A673 (cell line): ENCODE measurements at regions of chr7 and their contacts with region 1.

Region 1: DNA sequence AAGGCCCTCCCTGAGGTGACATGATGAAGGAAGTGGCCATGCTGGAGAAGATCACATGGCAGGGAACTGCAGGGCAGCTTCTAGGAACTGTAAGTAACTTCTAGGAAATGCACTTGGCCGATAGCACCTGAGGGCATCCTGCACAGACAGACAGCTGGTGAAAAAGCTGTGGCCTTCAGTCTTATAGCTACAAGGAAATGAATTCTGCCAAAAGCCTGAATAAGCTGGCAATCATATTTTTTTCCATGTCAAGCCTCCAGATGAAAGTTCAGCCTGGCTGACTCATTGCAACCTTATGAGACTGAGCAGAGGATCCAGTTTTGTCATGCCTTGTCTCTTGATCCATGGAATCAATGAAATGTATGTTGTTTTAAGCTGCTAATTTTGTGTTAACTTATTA is 91.1 kb upstream of the CACNA2D1 start:
- DNase-seq: no peak
- H3K4me3 ChIP-seq: no peak overlapping the region
- H3K27ac ChIP-seq: no peak overlapping the region
- H3K4me1 ChIP-seq: peaks cover 23% of the 10 kb centered on the region
- H3K27me3 ChIP-seq: peaks cover 5% of the 10 kb centered on the region
- CTCF ChIP-seq: no peak

Region 2: GRCh38 chr7:81013083-81013817 is 1521.4 kb before region 1 on chr7:
- CTCF ChIA-PET with region 1: interaction called, 15 read pairs
- POLR2A ChIA-PET with region 1: no interaction called
- intact Hi-C with region 1: no loop called
- DNase-seq: peak; percentile 47
- H3K4me3 ChIP-seq: no peak overlapping the region
- H3K27ac ChIP-seq: no peak overlapping the region
- H3K4me1 ChIP-seq: no peaks in the 10 kb centered on the region
- H3K27me3 ChIP-seq: no peaks in the 10 kb centered on the region
- CTCF ChIP-seq: no peak

Region 3: GRCh38 chr7:82404094-82404493 is 130.6 kb before region 1 on chr7:
- CTCF ChIA-PET with region 1: no interaction called
- POLR2A ChIA-PET with region 1: interaction called, 10 read pairs
- intact Hi-C with region 1: no loop called
- DNase-seq: no peak
- H3K4me3 ChIP-seq: no peak overlapping the region
- H3K27ac ChIP-seq: no peak overlapping the region
- H3K4me1 ChIP-seq: no peaks in the 10 kb centered on the region
- H3K27me3 ChIP-seq: no peaks in the 10 kb centered on the region
- CTCF ChIP-seq: no peak